CD4-positive, alpha-beta memory T cell (primary cell): ENCODE measurements at regions of chr1 and their contacts with region 1.

Region 1: GRCh38 chr1:207499573-207499972 is 3.6 kb downstream of the CR1 start:
- DNase-seq: peak; percentile 62 to 68 (median 64)
- H3K4me3 ChIP-seq: no peak overlapping the region
- H3K4me3 Mint-ChIP-seq: no peak overlapping the region
- H3K27ac ChIP-seq: no peak overlapping the region
- H3K27ac Mint-ChIP-seq: no peak overlapping the region
- H3K4me1 ChIP-seq: peaks cover 6% of the 10 kb centered on the region
- H3K4me1 Mint-ChIP-seq: peaks cover 5 to 13% (median 11%) of the 10 kb centered on the region in 4 donors
- H3K27me3 ChIP-seq: peaks cover 6% of the 10 kb centered on the region
- H3K27me3 Mint-ChIP-seq: peaks cover 19 to 30% of the 10 kb centered on the region in 2 donors

Region 2: GRCh38 chr1:207077470-207078377 is 421.8 kb before region 1 on chr1:
- CTCF ChIA-PET with region 1: interaction called, 62 read pairs
- POLR2A ChIA-PET with region 1: interaction called, 6 read pairs
- intact Hi-C with region 1: loop called (anchors 1 kb)
- DNase-seq: peak; percentile 69 to 75 (median 72)
- H3K4me3 ChIP-seq: no peak overlapping the region
- H3K4me3 Mint-ChIP-seq: no peak overlapping the region
- H3K27ac ChIP-seq: no peak overlapping the region
- H3K27ac Mint-ChIP-seq: no peak overlapping the region
- H3K4me1 ChIP-seq: no peaks in the 10 kb centered on the region
- H3K4me1 Mint-ChIP-seq: peaks cover 0 to 2% (median under 1%) of the 10 kb centered on the region in 4 donors
- H3K27me3 ChIP-seq: no peaks in the 10 kb centered on the region
- H3K27me3 Mint-ChIP-seq: peaks cover 7 to 11% of the 10 kb centered on the region in 2 donors

Region 3: GRCh38 chr1:207084701-207085180 is 414.8 kb before region 1 on chr1:
- CTCF ChIA-PET with region 1: interaction called, 62 read pairs
- POLR2A ChIA-PET with region 1: interaction called, 6 read pairs
- intact Hi-C with region 1: loop called (anchors 1 kb)
- DNase-seq: peak; percentile 53 to 62 (median 58)
- H3K4me3 ChIP-seq: no peak overlapping the region
- H3K4me3 Mint-ChIP-seq: no peak overlapping the region
- H3K27ac ChIP-seq: no peak overlapping the region
- H3K27ac Mint-ChIP-seq: peak overlapping the region in 2 of 7 donors; percentile 17 to 25
- H3K4me1 ChIP-seq: no peaks in the 10 kb centered on the region
- H3K4me1 Mint-ChIP-seq: peaks cover 6 to 11% (median 9%) of the 10 kb centered on the region in 4 donors
- H3K27me3 ChIP-seq: no peaks in the 10 kb centered on the region
- H3K27me3 Mint-ChIP-seq: peaks cover 6 to 17% of the 10 kb centered on the region in 2 donors

Region 4: DNA sequence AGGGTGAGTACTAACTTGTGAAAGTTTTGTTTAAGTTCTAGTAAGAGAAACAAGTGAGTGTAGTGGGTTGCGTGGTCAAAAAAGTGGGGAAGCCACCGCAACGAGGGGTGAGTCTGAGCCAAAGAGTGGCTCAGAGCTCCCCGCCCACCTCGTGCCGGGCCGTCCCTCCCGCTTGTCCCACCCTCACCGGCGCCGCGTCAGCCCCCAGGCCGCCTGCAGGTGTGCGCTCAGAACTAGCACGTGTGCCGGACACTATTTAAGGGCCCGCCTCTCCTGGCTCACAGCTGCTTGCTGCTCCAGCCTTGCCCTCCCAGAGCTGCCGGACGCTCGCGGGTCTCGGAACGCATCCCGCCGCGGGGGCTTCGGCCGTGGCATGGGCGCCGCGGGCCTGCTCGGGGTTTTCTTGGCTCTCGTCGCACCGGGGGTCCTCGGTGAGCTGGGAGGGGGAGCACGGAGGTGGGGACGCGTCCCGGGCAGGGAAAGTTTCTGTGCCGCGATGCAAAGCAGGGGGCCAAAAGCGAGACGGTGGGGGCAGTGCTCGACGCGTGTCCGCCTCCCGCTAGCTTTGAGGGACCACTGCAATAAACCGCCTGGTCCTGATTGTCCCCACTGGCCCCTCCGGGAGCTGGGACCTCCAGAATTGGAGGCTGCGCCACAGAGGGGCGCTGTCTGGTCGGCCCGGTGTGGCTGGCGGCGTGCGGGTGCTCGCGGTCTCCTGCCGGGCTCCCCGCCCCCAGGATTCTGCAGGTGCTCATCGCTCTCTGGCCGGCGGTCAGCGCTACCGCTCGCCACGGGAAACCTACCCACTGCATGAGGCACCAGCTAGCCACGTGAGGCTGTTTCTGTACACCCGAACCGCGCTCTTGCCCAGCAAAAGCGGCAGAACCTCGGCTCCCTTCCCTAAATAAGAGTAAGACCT is 45.3 kb before region 1 on chr1 and contains the start of gene CR2:
- CTCF ChIA-PET with region 1: interaction called, 51 read pairs
- POLR2A ChIA-PET with region 1: interaction called, 7 read pairs
- intact Hi-C with region 1: loop called (anchors 1 kb)
- DNase-seq: peak; percentile 25 to 44 (median 29)
- H3K4me3 ChIP-seq: peak within 1 kb of the TSS in 1 of 2 donors; percentile 25
- H3K4me3 Mint-ChIP-seq: peak within 1 kb of the TSS; percentile 62 to 82 (median 74)
- H3K27ac ChIP-seq: no peak within 1 kb of the TSS
- H3K27ac Mint-ChIP-seq: peak within 1 kb of the TSS in 2 of 7 donors; percentile 24 to 53
- H3K4me1 ChIP-seq: peaks cover 34% of the 10 kb centered on the region
- H3K4me1 Mint-ChIP-seq: peaks cover 7 to 16% (median 12%) of the 10 kb centered on the region in 4 donors
- H3K27me3 ChIP-seq: peaks cover 19% of the 10 kb centered on the region
- H3K27me3 Mint-ChIP-seq: peaks cover 22 to 28% of the 10 kb centered on the region in 2 donors
- total RNA-seq, gene CR2: 1.9 to 6.7 TPM